Mammary epithelial cell (primary cell): ENCODE measurements at regions of chr1 and their contacts with region 1.

Region 1: DNA sequence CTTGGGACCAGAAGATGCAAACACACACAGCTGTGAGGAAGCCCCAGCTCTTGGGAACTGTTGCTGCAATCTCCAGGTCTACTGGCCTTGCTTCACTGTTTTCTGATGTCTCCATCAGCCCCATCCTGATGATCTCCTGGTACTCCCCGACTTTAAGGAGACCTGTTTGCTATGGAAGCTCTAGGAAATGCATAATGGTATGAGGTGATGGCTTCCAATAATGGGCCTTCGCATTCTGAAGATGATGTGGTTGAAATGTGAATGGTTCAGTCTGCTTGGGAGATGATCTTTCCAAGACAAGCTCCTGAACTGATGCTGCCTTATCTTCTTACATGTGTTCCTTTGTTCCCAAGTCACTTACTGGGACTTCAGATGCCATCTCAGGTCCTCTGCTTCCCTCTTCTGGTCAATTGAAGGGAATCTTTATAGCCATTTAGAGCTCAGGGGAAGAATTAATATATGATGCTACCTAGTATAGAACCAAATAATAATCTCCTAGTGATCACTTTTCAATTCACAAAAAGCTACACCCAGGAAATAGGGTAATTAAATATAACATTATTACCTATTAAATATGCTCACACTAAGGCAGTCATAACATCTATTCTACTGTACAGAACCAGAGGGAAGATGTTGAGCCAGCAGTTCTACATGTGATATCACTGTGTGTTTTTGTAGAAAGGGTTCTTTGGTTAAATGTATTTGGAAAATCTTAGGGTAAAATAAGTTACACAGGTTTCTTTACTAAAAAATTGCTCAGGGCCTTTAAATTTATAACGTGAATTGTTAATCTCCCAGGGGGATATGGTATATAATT is 73.9 kb upstream of the VTCN1 start:
- DNase-seq: peak; percentile 55
- H3K4me3 ChIP-seq: no peak overlapping the region
- H3K27ac ChIP-seq: no peak overlapping the region
- H3K4me1 ChIP-seq: no peaks in the 10 kb centered on the region
- H3K27me3 ChIP-seq: peaks cover 2% of the 10 kb centered on the region
- CTCF ChIP-seq: peak; percentile 36 to 72

Region 2: GRCh38 chr1:116909510-116910378 is 374.9 kb before region 1 on chr1 and contains the start of gene PTGFRN:
- CTCF ChIA-PET with region 1: no interaction called
- dilution Hi-C with region 1: no loop called
- in situ Hi-C with region 1: no loop called
- intact Hi-C with region 1: no loop called
- DNase-seq: peak; percentile 81
- H3K4me3 ChIP-seq: peak within 1 kb of the TSS; percentile 63 to 82 (median 80)
- H3K27ac ChIP-seq: peak within 1 kb of the TSS; percentile 80
- H3K4me1 ChIP-seq: peaks cover 62% of the 10 kb centered on the region
- H3K27me3 ChIP-seq: no peaks in the 10 kb centered on the region
- CTCF ChIP-seq: no peak
- total RNA-seq, gene PTGFRN: 143 to 150 TPM

Region 3: GRCh38 chr1:117067533-117068370 is 216.9 kb before region 1 on chr1:
- CTCF ChIA-PET with region 1: interaction called, 11 read pairs
- dilution Hi-C with region 1: no loop called
- in situ Hi-C with region 1: loop called in 1 of 2 experiments (anchors 5 kb)
- intact Hi-C with region 1: loop called (anchors 1 kb)
- DNase-seq: peak; percentile 31
- H3K4me3 ChIP-seq: no peak overlapping the region
- H3K27ac ChIP-seq: no peak overlapping the region
- H3K4me1 ChIP-seq: no peaks in the 10 kb centered on the region
- H3K27me3 ChIP-seq: no peaks in the 10 kb centered on the region
- CTCF ChIP-seq: peak; percentile 73 to 87

Region 4: DNA sequence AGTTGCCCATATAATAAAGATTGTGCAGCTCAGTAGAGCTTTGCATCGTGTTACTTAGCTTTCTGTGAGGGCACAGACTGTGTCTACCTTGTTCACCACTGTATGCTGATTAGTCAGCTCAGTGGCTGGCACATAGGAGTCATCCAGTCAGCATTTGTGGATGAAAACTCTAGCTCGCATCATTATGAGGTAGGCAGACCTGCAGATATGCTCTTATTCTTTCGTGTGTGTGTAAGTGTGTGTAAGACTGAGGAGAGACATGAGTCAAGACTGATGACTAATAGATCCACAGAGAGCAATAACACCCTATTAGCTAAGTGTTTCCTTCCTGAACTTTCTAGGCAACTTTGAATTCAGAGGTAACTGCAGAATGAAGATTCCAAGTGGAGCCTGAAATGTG is 207.3 kb before region 1 on chr1:
- CTCF ChIA-PET with region 1: no interaction called
- dilution Hi-C with region 1: no loop called
- in situ Hi-C with region 1: loop called (anchors 5 kb)
- intact Hi-C with region 1: no loop called
- DNase-seq: peak; percentile 98
- H3K4me3 ChIP-seq: no peak overlapping the region
- H3K27ac ChIP-seq: peak overlapping the region; percentile 65
- H3K4me1 ChIP-seq: peaks cover 17% of the 10 kb centered on the region
- H3K27me3 ChIP-seq: no peaks in the 10 kb centered on the region
- CTCF ChIP-seq: no peak

Region 5: DNA sequence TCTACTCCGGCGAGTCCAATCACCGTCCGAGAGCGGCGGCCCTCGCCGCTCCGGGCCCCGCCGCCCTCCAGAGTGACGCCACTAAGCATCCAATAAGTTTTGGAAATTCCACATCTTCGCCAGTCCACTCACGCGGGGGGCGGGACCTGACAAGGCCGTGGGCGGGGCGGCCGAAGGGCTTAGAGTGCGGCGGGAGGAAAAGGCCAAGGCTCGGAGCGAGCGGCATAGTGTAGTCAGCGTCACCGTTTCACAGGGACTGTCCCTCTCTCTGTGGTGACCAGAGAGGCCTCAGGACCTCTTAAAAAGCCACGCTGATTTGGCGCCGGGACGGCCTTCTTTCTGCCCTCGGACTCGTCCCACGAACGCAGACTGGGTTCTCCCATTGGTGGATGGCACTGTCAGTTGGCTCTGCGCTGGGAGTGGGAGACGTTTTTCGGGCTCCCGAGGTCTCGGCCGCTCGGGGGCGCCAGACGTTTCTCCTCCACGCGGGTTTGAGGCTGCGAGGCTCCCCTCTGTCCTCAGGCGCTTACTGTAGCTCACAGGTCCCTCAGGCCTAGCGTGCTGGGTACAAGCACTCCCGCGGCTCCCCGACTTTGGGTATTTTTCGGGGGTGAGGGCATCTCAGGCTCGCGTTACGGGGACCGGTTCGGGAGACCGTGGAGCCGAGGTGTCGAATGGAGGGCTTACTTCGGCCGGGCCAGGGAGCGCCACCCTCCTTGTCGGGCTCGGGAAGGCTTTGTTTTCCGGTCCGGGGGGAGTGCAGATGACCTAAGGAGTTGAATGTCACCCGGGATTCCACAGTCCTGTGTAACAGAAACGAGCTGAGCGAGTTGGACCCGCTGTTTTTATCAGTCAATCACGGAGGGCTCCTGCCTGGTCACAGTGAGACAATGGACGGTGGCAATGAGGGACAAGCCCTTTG is 162.6 kb before region 1 on chr1:
- CTCF ChIA-PET with region 1: interaction called, 4 read pairs
- dilution Hi-C with region 1: no loop called
- in situ Hi-C with region 1: no loop called
- intact Hi-C with region 1: loop called (anchors 1 kb)
- DNase-seq: peak; percentile 97
- H3K4me3 ChIP-seq: peak overlapping the region; percentile 62 to 82 (median 66)
- H3K27ac ChIP-seq: peak overlapping the region; percentile 70
- H3K4me1 ChIP-seq: peaks cover 8% of the 10 kb centered on the region
- H3K27me3 ChIP-seq: no peaks in the 10 kb centered on the region
- CTCF ChIP-seq: peak; percentile 40 to 80

Region 6: DNA sequence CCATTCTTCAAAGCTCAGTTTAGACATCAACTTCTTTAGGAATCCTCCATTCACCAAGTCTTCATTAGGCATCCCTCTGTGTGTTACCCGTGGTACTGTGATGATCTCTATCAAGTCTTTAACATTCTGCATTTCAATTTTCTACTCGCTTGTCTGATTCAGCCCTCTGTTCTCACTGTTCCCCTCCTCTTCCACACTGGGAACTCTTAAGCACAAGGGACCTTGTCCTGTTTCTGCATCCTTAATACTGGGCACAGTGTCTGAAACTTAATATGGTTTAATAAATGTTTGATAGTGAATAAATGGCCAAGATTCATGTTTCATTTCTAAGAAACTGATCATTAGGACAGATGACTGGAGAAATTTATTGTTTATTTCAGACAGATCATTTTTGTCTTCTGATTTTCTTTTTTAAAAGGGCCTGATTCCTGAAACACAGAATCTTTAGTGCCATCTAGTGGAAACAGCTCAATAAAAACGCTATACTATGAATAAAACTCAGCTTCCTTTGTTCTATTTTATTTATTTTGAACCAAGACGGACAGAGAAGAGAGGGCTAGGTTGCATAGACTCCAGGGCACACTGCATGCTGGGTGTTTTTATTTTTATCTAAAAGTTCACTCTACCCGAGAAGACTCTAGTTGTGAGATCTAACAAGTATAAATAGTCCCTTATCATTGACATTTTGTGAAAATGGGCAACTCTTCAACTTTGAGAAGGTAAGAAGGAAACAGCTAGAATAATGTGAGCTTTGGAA is 156.1 kb before region 1 on chr1:
- CTCF ChIA-PET with region 1: interaction called, 13 read pairs
- dilution Hi-C with region 1: no loop called
- in situ Hi-C with region 1: no loop called
- intact Hi-C with region 1: loop called (anchors 1 kb)
- DNase-seq: peak; percentile 16
- H3K4me3 ChIP-seq: no peak overlapping the region
- H3K27ac ChIP-seq: no peak overlapping the region
- H3K4me1 ChIP-seq: no peaks in the 10 kb centered on the region
- H3K27me3 ChIP-seq: no peaks in the 10 kb centered on the region
- CTCF ChIP-seq: peak; percentile 53 to 54

Region 7: DNA sequence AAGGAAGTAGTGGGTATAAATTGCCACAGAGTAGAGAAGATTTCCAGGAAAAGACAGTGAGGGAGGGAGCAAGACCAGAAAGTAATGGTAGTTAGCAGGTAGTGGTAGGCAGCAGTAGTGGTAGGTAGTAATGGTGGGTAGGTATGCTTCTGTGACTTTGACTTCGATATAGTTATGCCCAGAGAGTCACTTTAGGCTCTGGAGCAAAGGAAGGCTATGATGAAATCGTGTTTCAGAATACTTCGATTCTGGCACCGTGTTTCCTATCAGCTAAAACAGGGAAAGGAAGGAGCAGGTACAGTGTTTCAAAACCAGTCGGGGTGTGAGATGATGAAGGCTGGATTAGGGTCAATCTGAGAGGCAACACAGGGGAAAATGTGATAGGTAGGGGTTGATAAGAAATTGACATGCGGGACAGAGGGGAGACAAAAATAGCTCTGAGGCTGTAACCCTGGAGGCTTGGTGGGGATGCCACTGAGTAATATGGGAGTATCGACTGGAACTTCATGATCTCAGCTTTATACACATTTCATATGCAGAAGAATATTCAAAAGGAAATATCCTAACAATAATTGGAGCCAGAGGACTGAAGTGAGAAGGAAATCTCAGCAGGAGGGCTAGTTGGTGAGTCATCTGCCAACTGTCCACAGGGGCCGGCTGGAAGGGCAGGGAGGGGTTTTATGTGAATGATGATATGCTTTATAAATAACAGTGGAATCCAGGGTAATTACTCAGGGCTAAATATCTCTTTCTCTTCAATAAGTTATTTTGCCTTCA is 137.8 kb before region 1 on chr1:
- CTCF ChIA-PET with region 1: interaction called, 4 read pairs
- dilution Hi-C with region 1: no loop called
- in situ Hi-C with region 1: no loop called
- intact Hi-C with region 1: loop called (anchors 1 kb)
- DNase-seq: peak; percentile 73
- H3K4me3 ChIP-seq: no peak overlapping the region
- H3K27ac ChIP-seq: no peak overlapping the region
- H3K4me1 ChIP-seq: peaks cover 13% of the 10 kb centered on the region
- H3K27me3 ChIP-seq: no peaks in the 10 kb centered on the region
- CTCF ChIP-seq: no peak

Region 8: GRCh38 chr1:117321680-117322609 is 37.3 kb after region 1 on chr1:
- CTCF ChIA-PET with region 1: no interaction called
- dilution Hi-C with region 1: no loop called
- in situ Hi-C with region 1: no loop called
- intact Hi-C with region 1: loop called (anchors 1 kb)
- DNase-seq: no peak
- H3K4me3 ChIP-seq: no peak overlapping the region
- H3K27ac ChIP-seq: no peak overlapping the region
- H3K4me1 ChIP-seq: no peaks in the 10 kb centered on the region
- H3K27me3 ChIP-seq: peaks cover 16% of the 10 kb centered on the region
- CTCF ChIP-seq: no peak